Naive thymus-derived CD4-positive, alpha-beta T cell (primary cell): ENCODE measurements at regions of chr6 and their contacts with region 1.

Region 1: DNA sequence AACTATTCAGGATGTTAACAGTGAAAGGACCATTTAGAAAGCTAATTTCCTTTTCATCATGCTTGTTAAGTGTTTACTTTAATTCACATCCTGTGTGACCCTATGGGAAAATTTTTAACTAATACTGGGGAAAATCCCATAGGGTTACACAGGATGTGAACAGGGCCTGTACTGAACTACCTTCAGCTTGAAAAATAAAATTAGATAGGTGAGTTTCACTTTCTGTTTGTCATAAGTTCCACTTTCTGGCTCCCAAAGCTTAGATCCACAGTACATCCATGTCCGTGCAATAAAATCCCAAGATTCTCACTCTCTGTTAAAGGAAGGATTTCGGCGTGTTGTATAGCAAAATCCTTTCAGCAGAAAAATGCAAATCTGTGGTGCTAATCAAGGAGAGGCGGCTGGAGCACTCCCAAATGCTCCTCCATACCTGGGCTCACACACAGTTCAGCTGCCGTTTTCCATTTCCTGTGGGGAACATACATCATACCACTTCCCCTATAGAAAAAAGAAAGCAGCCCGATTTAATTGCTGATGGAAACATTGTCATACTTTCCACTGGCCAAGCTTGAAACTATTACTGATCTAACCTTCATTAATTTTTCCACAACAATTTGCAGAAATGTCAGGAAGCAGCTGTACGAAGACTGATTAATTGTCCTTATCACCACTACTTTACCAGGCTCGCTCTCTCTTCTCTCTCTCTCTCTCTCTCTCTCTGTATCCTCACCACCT is 125.2 kb downstream of the HIVEP2 start:
- DNase-seq: peak in 6 of 9 donors; percentile 27 to 80 (median 44)
- ATAC-seq: peak; percentile 75
- H3K4me3 ChIP-seq: peak overlapping the region; percentile 66
- H3K4me3 Mint-ChIP-seq: peak overlapping the region; percentile 72 to 93 (median 89)
- H3K27ac ChIP-seq: peak overlapping the region; percentile 82
- H3K27ac Mint-ChIP-seq: peak overlapping the region; percentile 68 to 99 (median 92)
- H3K4me1 ChIP-seq: peaks cover 59 to 67% of the 10 kb centered on the region in 2 donors
- H3K4me1 Mint-ChIP-seq: peaks cover 52 to 95% (median 83%) of the 10 kb centered on the region in 7 donors
- H3K27me3 ChIP-seq: no peaks in the 10 kb centered on the region
- H3K27me3 Mint-ChIP-seq: no peaks in the 10 kb centered on the region

Region 2: GRCh38 chr6:142518115-142518514 is 301.7 kb before region 1 on chr6:
- CTCF ChIA-PET with region 1: no interaction called
- POLR2A ChIA-PET with region 1: no interaction called
- intact Hi-C with region 1: no loop called
- DNase-seq: no peak
- ATAC-seq: no peak
- H3K4me3 ChIP-seq: no peak overlapping the region
- H3K4me3 Mint-ChIP-seq: no peak overlapping the region
- H3K27ac ChIP-seq: no peak overlapping the region
- H3K27ac Mint-ChIP-seq: peak overlapping the region in 1 of 9 donors; percentile 22
- H3K4me1 ChIP-seq: no peaks in the 10 kb centered on the region
- H3K4me1 Mint-ChIP-seq: peaks cover 0 to 28% (median 13%) of the 10 kb centered on the region in 7 donors
- H3K27me3 ChIP-seq: no peaks in the 10 kb centered on the region
- H3K27me3 Mint-ChIP-seq: no peaks in the 10 kb centered on the region

Region 3: GRCh38 chr6:142671791-142672190 is 148.0 kb before region 1 on chr6:
- CTCF ChIA-PET with region 1: no interaction called
- POLR2A ChIA-PET with region 1: no interaction called
- intact Hi-C with region 1: no loop called
- DNase-seq: no peak
- ATAC-seq: peak; percentile 12
- H3K4me3 ChIP-seq: no peak overlapping the region
- H3K4me3 Mint-ChIP-seq: no peak overlapping the region
- H3K27ac ChIP-seq: no peak overlapping the region
- H3K27ac Mint-ChIP-seq: no peak overlapping the region
- H3K4me1 ChIP-seq: peaks cover 0 to 1% of the 10 kb centered on the region in 2 donors
- H3K4me1 Mint-ChIP-seq: peaks cover 2 to 15% (median 11%) of the 10 kb centered on the region in 7 donors
- H3K27me3 ChIP-seq: no peaks in the 10 kb centered on the region
- H3K27me3 Mint-ChIP-seq: peaks cover 0 to 6% (median 0%) of the 10 kb centered on the region in 5 donors

Region 4: DNA sequence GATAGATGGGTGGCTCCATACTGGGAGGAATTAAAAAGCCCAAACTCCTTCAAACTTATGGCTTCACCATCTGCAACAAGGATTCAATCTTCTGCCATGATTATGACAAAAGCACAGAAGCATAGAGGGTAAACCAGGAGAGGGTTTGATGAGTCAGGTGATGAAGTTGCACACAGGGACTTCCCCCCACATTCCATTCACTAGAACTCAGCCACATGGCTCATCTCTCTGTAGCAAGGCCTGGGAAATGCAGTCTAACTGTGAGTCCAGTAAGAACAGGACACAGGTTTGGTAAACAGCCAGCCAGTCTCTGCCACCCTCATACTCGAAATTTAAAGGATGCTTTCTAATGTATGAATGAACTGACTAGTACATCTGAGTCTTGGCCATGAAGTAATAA is 17.6 kb before region 1 on chr6:
- CTCF ChIA-PET with region 1: no interaction called
- POLR2A ChIA-PET with region 1: interaction called, 5 read pairs
- intact Hi-C with region 1: loop called in 1 of 2 experiments (anchors 2 kb)
- DNase-seq: peak in 1 of 9 donors; percentile 44
- ATAC-seq: no peak
- H3K4me3 ChIP-seq: no peak overlapping the region
- H3K4me3 Mint-ChIP-seq: peak overlapping the region in 2 of 10 donors; percentile 2 to 3
- H3K27ac ChIP-seq: no peak overlapping the region
- H3K27ac Mint-ChIP-seq: peak overlapping the region in 8 of 9 donors; percentile 8 to 82 (median 62)
- H3K4me1 ChIP-seq: peaks cover 0 to 45% of the 10 kb centered on the region in 2 donors
- H3K4me1 Mint-ChIP-seq: peaks cover 38 to 99% (median 95%) of the 10 kb centered on the region in 7 donors
- H3K27me3 ChIP-seq: no peaks in the 10 kb centered on the region
- H3K27me3 Mint-ChIP-seq: no peaks in the 10 kb centered on the region

Region 5: GRCh38 chr6:142850679-142851423 is 31.1 kb after region 1 on chr6:
- CTCF ChIA-PET with region 1: interaction called, 3 read pairs
- POLR2A ChIA-PET with region 1: interaction called, 71 read pairs
- intact Hi-C with region 1: loop called in 1 of 2 experiments (anchors 5 kb)
- DNase-seq: peak in 1 of 9 donors; percentile 39
- ATAC-seq: peak; percentile 36
- H3K4me3 ChIP-seq: peak overlapping the region; percentile 32
- H3K4me3 Mint-ChIP-seq: peak overlapping the region; percentile 58 to 78 (median 72)
- H3K27ac ChIP-seq: peak overlapping the region; percentile 66
- H3K27ac Mint-ChIP-seq: peak overlapping the region; percentile 76 to 100 (median 91)
- H3K4me1 ChIP-seq: peaks cover 94 to 95% of the 10 kb centered on the region in 2 donors
- H3K4me1 Mint-ChIP-seq: peaks cover 47 to 100% (median 97%) of the 10 kb centered on the region in 7 donors
- H3K27me3 ChIP-seq: no peaks in the 10 kb centered on the region
- H3K27me3 Mint-ChIP-seq: no peaks in the 10 kb centered on the region

Region 6: GRCh38 chr6:142902636-142903053 is 82.9 kb after region 1 on chr6:
- CTCF ChIA-PET with region 1: interaction called, 3 read pairs
- POLR2A ChIA-PET with region 1: no interaction called
- intact Hi-C with region 1: loop called in 1 of 2 experiments (anchors 1 kb)
- DNase-seq: peak; percentile 60 to 89 (median 84)
- ATAC-seq: peak; percentile 84
- H3K4me3 ChIP-seq: peak overlapping the region; percentile 26
- H3K4me3 Mint-ChIP-seq: peak overlapping the region in 7 of 10 donors; percentile 77 to 88 (median 83)
- H3K27ac ChIP-seq: peak overlapping the region; percentile 88
- H3K27ac Mint-ChIP-seq: peak overlapping the region in 1 of 9 donors; percentile 95
- H3K4me1 ChIP-seq: peaks cover 48 to 71% of the 10 kb centered on the region in 2 donors
- H3K4me1 Mint-ChIP-seq: peaks cover 13 to 64% (median 41%) of the 10 kb centered on the region in 7 donors
- H3K27me3 ChIP-seq: no peaks in the 10 kb centered on the region
- H3K27me3 Mint-ChIP-seq: no peaks in the 10 kb centered on the region

Region 7: GRCh38 chr6:142926494-142927270 is 106.9 kb after region 1 on chr6:
- CTCF ChIA-PET with region 1: no interaction called
- POLR2A ChIA-PET with region 1: interaction called, 12 read pairs
- intact Hi-C with region 1: no loop called
- DNase-seq: peak; percentile 62 to 87 (median 84)
- ATAC-seq: peak; percentile 88
- H3K4me3 ChIP-seq: peak overlapping the region; percentile 87
- H3K4me3 Mint-ChIP-seq: peak overlapping the region; percentile 88 to 99 (median 96)
- H3K27ac ChIP-seq: peak overlapping the region; percentile 100
- H3K27ac Mint-ChIP-seq: peak overlapping the region; percentile 93 to 100 (median 100)
- H3K4me1 ChIP-seq: peaks cover 35 to 40% of the 10 kb centered on the region in 2 donors
- H3K4me1 Mint-ChIP-seq: peaks cover 20 to 75% (median 68%) of the 10 kb centered on the region in 7 donors
- H3K27me3 ChIP-seq: no peaks in the 10 kb centered on the region
- H3K27me3 Mint-ChIP-seq: no peaks in the 10 kb centered on the region